Activated B cell treated with CpG ODN at 0.5 μM for 24 hours (primary cell): ENCODE measurements at regions of chr19 and their contacts with region 1.

Region 1: DNA sequence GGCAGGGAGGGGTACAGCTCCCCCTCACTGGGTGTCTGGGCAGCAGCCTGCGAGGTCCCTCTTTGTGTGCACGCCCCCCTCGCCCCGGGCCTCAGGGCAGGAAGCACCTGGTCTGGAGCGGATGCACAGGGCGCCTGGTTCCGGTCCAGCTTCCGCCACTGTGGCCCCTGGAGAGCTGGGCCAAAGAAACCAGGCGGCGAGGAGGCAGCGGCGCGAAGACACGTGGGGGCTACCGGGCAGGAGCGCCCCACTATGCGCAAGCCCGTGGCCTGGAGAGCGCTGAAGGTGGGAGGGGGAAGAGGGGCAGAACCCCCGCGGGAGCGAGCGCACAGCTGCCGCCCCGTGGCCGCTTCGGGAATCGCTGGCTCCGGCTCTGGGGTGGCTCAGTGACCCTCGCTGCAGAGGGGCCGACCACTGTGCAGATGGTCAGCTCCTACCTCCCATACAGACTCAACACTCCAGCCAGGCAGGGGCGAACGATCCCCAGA is 1.7 kb upstream of the LYL1 start:
- DNase-seq: peak; percentile 86
- ATAC-seq: peak; percentile 56
- H3K4me3 Mint-ChIP-seq: peak overlapping the region; percentile 88
- H3K27ac Mint-ChIP-seq: peak overlapping the region; percentile 98
- H3K4me1 Mint-ChIP-seq: peaks cover 69% of the 10 kb centered on the region
- H3K27me3 Mint-ChIP-seq: no peaks in the 10 kb centered on the region
- CTCF ChIP-seq: peak; percentile 86

Region 2: GRCh38 chr19:12815088-12815487 is 289.3 kb before region 1 on chr19:
- CTCF ChIA-PET with region 1: no interaction called
- POLR2A ChIA-PET with region 1: no interaction called
- intact Hi-C with region 1: no loop called
- DNase-seq: no peak
- ATAC-seq: no peak
- H3K4me3 Mint-ChIP-seq: no peak overlapping the region
- H3K27ac Mint-ChIP-seq: no peak overlapping the region
- H3K4me1 Mint-ChIP-seq: no peaks in the 10 kb centered on the region
- H3K27me3 Mint-ChIP-seq: no peaks in the 10 kb centered on the region
- CTCF ChIP-seq: no peak

Region 3: GRCh38 chr19:12983542-12984142 is 120.8 kb before region 1 on chr19:
- CTCF ChIA-PET with region 1: no interaction called
- POLR2A ChIA-PET with region 1: interaction called, 15 read pairs
- intact Hi-C with region 1: no loop called
- DNase-seq: peak; percentile 94
- ATAC-seq: peak; percentile 78
- H3K4me3 Mint-ChIP-seq: no peak overlapping the region
- H3K27ac Mint-ChIP-seq: no peak overlapping the region
- H3K4me1 Mint-ChIP-seq: peaks cover 5% of the 10 kb centered on the region
- H3K27me3 Mint-ChIP-seq: peaks cover 3% of the 10 kb centered on the region
- CTCF ChIP-seq: peak; percentile 65

Region 4: DNA sequence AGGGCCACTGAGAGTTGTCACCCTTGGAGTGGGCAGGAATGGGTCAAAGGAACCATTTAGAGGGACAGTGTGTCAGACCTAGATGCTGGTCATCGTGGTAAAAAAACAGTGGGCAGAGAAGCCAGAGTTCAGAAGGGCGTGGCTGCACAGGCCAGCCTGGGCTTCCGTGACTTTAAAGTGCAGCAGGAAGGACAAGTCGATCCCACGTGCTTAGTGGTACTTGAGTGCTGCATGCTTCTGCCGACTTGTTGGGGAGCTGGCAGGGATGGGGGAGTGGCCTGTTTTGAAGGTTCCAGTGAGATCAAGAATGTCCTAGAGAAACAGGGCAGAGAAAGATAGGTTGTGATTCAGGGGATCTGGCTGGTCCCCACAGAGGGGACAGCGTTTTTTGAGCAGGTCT is 18.7 kb before region 1 on chr19:
- CTCF ChIA-PET with region 1: no interaction called
- POLR2A ChIA-PET with region 1: no interaction called
- intact Hi-C with region 1: no loop called
- DNase-seq: no peak
- ATAC-seq: no peak
- H3K4me3 Mint-ChIP-seq: no peak overlapping the region
- H3K27ac Mint-ChIP-seq: no peak overlapping the region
- H3K4me1 Mint-ChIP-seq: no peaks in the 10 kb centered on the region
- H3K27me3 Mint-ChIP-seq: peaks cover 6% of the 10 kb centered on the region
- CTCF ChIP-seq: no peak

Region 5: GRCh38 chr19:13117772-13118423 is 13.5 kb after region 1 on chr19 and contains the start of gene NACC1:
- CTCF ChIA-PET with region 1: interaction called, 11 read pairs
- POLR2A ChIA-PET with region 1: interaction called, 158 read pairs
- intact Hi-C with region 1: loop called (anchors 1 kb)
- DNase-seq: peak; percentile 94
- ATAC-seq: peak; percentile 81
- H3K4me3 Mint-ChIP-seq: peak within 1 kb of the TSS; percentile 99
- H3K27ac Mint-ChIP-seq: peak within 1 kb of the TSS; percentile 96
- H3K4me1 Mint-ChIP-seq: peaks cover 64% of the 10 kb centered on the region
- H3K27me3 Mint-ChIP-seq: no peaks in the 10 kb centered on the region
- CTCF ChIP-seq: no peak
- total RNA-seq, gene NACC1: 62.1 and 68.8 TPM in 2 replicates

Region 6: DNA sequence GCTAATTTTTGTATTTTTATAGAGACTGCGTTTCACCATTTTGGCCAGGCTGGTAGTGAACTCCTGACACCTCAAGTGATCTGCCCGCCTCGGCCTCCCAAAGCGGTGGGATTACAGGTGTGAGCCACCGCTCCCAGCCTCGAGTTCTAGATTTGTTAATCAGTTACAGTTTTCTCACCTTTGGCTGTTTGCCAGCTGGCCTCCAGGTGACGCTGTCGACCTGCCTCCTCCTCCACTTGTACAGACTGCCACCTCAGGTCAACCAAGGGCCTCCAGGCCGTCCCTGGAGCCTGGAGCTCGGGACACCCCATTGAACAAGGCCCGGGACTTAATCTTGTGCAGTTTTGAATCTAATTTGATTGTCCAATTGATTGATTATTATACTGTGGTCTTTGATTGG is 91.3 kb after region 1 on chr19:
- CTCF ChIA-PET with region 1: interaction called, 4 read pairs
- POLR2A ChIA-PET with region 1: interaction called, 10 read pairs
- intact Hi-C with region 1: no loop called
- DNase-seq: peak; percentile 57
- ATAC-seq: peak; percentile 79
- H3K4me3 Mint-ChIP-seq: no peak overlapping the region
- H3K27ac Mint-ChIP-seq: peak overlapping the region; percentile 63
- H3K4me1 Mint-ChIP-seq: peaks cover 29% of the 10 kb centered on the region
- H3K27me3 Mint-ChIP-seq: no peaks in the 10 kb centered on the region
- CTCF ChIP-seq: no peak

Region 7: GRCh38 chr19:13234518-13234917 is 130.1 kb after region 1 on chr19:
- CTCF ChIA-PET with region 1: no interaction called
- POLR2A ChIA-PET with region 1: no interaction called
- intact Hi-C with region 1: no loop called
- DNase-seq: peak; percentile 27
- ATAC-seq: peak; percentile 90
- H3K4me3 Mint-ChIP-seq: peak overlapping the region; percentile 56
- H3K27ac Mint-ChIP-seq: peak overlapping the region; percentile 12
- H3K4me1 Mint-ChIP-seq: peaks cover 12% of the 10 kb centered on the region
- H3K27me3 Mint-ChIP-seq: peaks cover 6% of the 10 kb centered on the region
- CTCF ChIP-seq: no peak

Region 8: GRCh38 chr19:13339869-13340268 is 235.5 kb after region 1 on chr19:
- CTCF ChIA-PET with region 1: no interaction called
- POLR2A ChIA-PET with region 1: no interaction called
- intact Hi-C with region 1: no loop called
- DNase-seq: no peak
- ATAC-seq: no peak
- H3K4me3 Mint-ChIP-seq: no peak overlapping the region
- H3K27ac Mint-ChIP-seq: no peak overlapping the region
- H3K4me1 Mint-ChIP-seq: no peaks in the 10 kb centered on the region
- H3K27me3 Mint-ChIP-seq: peaks cover 14% of the 10 kb centered on the region
- CTCF ChIP-seq: no peak

Region 9: GRCh38 chr19:13846557-13847406 is 742.4 kb after region 1 on chr19:
- CTCF ChIA-PET with region 1: no interaction called
- POLR2A ChIA-PET with region 1: no interaction called
- intact Hi-C with region 1: loop called (anchors 2 kb)
- DNase-seq: peak; percentile 92
- ATAC-seq: peak; percentile 56
- H3K4me3 Mint-ChIP-seq: peak overlapping the region; percentile 88
- H3K27ac Mint-ChIP-seq: peak overlapping the region; percentile 98
- H3K4me1 Mint-ChIP-seq: peaks cover 62% of the 10 kb centered on the region
- H3K27me3 Mint-ChIP-seq: peaks cover 3% of the 10 kb centered on the region
- CTCF ChIP-seq: no peak